AG04449 (cell line): ENCODE measurements at regions of chr1 and their contacts with region 1.

Region 1: DNA sequence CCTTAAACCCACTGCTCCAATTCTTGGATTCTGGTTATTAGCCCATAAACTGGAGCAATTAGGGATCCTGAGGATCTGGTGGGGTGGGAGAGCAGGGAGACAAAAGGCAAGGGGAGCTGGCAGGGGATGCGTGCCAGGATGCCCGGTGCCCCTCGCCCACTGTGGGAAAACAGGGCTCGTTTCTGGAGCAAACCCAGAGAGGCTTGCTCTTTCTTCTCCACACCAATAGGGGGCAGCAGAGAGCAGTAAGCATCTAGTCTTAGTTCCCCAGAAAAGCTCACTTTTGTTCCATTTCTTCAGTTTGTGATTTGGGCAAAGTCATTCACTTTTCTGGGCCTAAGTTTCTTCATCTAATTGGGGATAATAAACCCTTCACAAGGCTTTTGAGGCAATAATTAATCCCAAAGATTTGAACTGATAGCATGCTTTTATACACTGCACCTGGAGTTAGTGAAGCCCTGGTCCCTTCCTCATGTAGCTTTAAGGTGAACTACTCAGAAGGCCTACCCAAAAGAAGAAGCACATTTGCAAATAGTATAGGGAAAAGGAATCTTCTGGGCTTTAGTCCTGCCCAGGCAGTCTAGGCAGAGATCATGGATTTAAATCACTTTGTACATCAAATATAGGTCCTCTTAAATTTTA is 160.6 kb upstream of the USP24 start:
- DNase-seq: no peak
- H3K4me3 ChIP-seq: no peak overlapping the region
- CTCF ChIP-seq: peak; percentile 83

Region 2: GRCh38 chr1:55050283-55050682 is 325.5 kb before region 1 on chr1:
- CTCF ChIA-PET with region 1: no interaction called
- POLR2A ChIA-PET with region 1: no interaction called
- DNase-seq: no peak
- H3K4me3 ChIP-seq: no peak overlapping the region
- CTCF ChIP-seq: no peak

Region 3: GRCh38 chr1:55284852-55285251 is 90.9 kb before region 1 on chr1:
- CTCF ChIA-PET with region 1: interaction called, 41 read pairs
- POLR2A ChIA-PET with region 1: no interaction called
- DNase-seq: no peak
- H3K4me3 ChIP-seq: no peak overlapping the region
- CTCF ChIP-seq: peak; percentile 53

Region 4: DNA sequence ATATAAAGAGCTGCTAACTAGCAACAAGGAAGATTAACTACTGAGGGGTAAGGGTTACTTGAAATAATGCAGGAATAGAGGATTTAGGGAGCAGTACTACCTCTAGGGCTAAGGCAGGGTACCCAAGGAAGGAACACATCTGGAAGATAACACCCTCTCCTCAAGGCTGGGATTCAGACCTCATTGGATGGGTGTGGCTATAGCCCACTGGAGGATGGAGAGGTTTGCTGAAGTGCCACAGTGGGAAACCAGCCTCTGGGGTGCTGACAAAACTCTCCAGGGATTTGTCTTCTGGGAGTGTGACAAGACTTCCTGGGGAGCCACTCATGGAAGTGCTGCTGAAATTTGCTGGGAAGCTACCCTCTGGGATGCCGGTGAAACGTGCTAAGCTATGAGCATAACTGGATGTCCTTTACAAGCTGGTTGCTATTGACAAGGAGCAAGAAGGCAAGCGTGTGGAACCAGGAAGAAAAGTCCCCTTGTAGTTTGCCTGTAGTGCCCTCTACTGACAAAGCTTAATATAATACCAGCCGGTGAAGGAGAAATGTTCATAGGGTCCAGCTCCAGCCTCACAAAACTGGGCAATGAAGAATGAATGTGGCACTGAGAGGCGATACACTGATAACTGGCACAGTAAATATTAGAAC is 37.8 kb before region 1 on chr1:
- CTCF ChIA-PET with region 1: interaction called, 14 read pairs
- POLR2A ChIA-PET with region 1: no interaction called
- DNase-seq: peak; percentile 23
- H3K4me3 ChIP-seq: no peak overlapping the region
- CTCF ChIP-seq: peak; percentile 43

Region 5: DNA sequence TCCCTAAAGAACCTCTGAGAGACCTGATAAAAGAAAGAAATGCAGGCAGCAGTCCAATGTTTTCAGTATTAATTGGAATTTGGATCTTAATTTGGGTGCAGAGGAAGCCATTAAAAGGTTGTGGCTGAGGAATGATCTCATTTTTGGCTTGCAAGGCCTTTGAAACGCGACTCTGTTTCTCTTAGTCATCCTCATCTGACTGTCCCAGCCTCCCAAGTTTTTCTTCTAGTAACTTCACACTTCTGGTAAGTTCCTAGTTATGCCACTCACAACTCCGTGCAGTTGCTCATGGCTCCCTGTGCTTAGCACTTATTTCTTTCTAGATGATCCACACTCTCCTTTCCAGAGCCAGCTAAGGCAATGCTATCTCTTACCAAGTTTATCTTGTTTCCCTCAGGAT is 13.2 kb before region 1 on chr1:
- CTCF ChIA-PET with region 1: interaction called, 120 read pairs
- POLR2A ChIA-PET with region 1: no interaction called
- DNase-seq: peak; percentile 34
- H3K4me3 ChIP-seq: no peak overlapping the region
- CTCF ChIP-seq: no peak

Region 6: GRCh38 chr1:55402142-55402541 is 26.4 kb after region 1 on chr1:
- CTCF ChIA-PET with region 1: interaction called, 15 read pairs
- POLR2A ChIA-PET with region 1: no interaction called
- DNase-seq: peak; percentile 40
- H3K4me3 ChIP-seq: no peak overlapping the region
- CTCF ChIP-seq: no peak

Region 7: DNA sequence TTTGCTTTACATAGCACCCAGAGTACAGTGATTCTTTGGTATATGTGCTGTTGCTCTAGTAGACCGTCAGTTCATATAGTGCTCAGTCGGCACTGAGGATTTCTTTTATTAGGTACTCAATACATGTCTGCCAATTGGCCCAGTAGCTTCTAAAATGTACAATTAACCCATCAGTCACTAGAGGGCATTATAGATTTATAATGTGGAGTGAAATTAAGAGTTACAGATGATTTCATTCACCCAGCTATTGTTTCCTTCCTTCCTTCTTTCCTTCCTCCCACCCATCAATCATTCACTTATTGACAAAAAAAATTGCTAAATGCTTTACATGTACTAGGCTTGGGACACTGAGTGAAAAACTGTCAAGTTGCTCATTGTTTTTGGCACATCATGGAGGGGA is 103.0 kb after region 1 on chr1:
- CTCF ChIA-PET with region 1: interaction called, 19 read pairs
- POLR2A ChIA-PET with region 1: no interaction called
- DNase-seq: no peak
- H3K4me3 ChIP-seq: no peak overlapping the region
- CTCF ChIP-seq: peak; percentile 6

Region 8: DNA sequence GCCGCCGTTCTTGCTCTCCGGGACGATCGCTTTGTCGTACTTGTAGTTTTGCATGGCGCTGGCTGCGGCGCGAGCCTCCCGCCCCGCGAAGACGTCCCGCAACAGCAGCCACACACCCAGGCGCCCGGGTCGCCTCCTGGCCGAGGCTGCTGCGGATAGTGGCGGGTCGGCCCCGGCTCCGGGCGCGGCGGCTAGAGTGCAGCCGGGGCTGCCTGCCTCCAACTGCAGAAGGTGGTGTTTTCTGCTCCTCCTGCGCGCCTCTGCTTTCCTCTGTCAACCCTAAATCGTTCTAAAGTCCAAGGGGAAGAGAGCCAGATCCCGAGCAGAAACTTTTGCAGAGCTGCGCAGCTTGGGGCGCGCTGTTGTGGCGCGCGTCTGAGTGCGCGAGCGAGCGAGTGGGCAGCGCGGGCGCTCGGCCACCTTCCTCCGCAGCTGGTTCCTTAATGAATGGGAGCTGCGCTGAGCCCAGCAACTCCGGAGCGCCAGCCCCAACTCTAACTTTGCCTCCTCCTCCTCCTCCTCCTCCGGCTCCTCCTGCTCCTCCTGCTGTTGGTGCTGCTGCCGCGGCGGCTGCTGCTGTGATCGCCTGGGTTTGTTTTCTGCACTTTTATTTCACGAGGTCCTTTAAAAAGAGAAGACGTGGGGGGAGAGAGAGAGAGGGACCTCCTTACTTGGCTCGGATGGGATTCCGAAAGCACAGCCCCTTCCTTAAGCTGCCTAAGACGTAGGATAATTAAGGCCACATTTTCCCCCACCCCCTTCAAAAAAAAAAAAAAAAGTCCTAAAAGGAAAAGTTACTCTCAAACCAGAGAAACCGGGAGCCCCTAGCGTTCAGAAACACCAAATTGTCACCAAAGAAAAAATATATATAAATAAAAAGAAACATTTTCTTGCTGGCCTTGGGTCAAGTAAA is 1203.5 kb after region 1 on chr1 and contains the start of gene PLPP3:
- CTCF ChIA-PET with region 1: interaction called, 55 read pairs
- POLR2A ChIA-PET with region 1: interaction called, 3 read pairs
- DNase-seq: peak; percentile 71
- H3K4me3 ChIP-seq: peak within 1 kb of the TSS; percentile 89
- CTCF ChIP-seq: peak; percentile 63